GM12878 (cell line): ENCODE measurements at regions of chr12 and their contacts with region 1.

Region 1: DNA sequence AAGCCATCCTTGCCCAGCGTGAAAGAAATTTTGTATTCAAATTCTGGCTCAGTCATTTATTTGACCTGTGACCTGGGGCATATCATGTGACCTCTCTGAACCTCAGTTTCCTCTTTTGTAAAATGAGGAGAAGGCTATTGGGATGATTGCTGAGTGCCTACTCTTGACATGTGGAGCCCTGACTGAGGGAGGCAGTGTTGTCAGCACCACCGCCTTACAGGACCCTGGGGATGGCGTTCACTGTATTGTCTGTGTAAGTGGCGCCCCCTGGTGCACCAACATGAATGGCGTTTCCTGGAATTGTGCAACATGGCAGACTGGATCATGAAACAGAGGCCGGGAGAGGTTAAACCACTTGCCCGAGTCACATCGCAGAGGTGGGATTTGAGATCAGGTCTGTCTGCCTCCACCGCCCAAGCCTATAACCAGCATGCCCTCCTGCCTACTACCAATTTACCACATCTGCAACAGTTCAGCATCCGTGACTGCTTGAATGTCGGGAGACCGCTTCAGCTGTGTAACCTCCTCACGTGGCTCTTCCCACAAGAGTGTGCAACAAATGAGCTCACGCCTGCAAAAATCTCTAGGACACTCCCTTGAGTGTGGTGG is 20.1 kb upstream of the CCDC63 start:
- DNase-seq: peak; percentile 70
- ATAC-seq: peak; percentile 99
- H3K4me3 ChIP-seq: no peak overlapping the region
- H3K27ac ChIP-seq: no peak overlapping the region
- H3K4me1 ChIP-seq: peaks cover 10% of the 10 kb centered on the region; the same call in 1 of the 2 replicates
- H3K27me3 ChIP-seq: no peaks in the 10 kb centered on the region
- CTCF ChIP-seq: peak; percentile 89 to 99 (median 97)
- EP300 ChIP-seq: no peak
- POLR2A ChIP-seq: no peak
- RAD21 ChIP-seq: peak; percentile 98

Region 2: DNA sequence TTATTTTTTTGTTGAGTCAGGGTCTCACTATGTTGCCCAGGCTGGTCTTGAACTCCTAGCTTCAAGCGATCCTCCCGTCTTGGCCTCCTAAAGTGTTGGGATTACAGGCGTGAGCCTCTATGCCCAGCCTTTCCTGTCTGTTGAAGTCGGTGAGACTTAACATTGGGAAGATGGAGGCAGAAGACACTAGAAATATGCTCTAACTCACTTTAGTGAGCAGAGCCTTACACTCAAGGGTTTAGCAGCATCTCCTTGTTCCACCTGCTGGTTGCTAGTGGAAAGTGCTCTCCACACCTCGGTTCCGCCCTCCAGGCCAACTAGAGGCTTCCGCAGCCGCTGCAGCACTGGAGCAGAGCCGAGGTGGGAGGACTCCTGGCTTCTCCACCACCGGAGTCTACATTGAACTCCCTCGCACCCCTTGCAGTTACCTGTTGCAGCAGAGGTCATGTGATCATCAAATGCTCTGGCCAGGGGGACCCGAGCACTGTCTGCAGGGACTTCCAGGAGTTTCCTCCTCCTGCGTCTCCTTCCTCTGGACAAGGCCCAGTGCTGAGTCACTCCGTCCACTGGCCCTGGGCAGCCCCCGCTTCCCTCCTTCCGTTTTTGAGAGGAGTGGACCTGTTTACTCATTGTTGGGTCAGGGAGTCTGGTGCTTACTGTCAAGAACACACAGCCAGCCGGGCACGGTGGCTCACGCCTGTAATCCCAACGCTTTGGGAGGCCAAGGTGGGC is 128.4 kb before region 1 on chr12:
- CTCF ChIA-PET with region 1: interaction called, 10 read pairs
- POLR2A ChIA-PET with region 1: interaction called, 5 read pairs
- RAD21 ChIA-PET with region 1: interaction called, 3 read pairs
- SMC1A ChIA-PET with region 1: interaction called, 4 read pairs
- in situ Hi-C with region 1: loop called (anchors 5 kb)
- intact Hi-C with region 1: loop called (anchors 2 kb)
- DNase-seq: peak; percentile 90
- ATAC-seq: peak; percentile 99
- H3K4me3 ChIP-seq: no peak overlapping the region
- H3K27ac ChIP-seq: peak overlapping the region; percentile 64
- H3K4me1 ChIP-seq: peaks cover 29% of the 10 kb centered on the region
- H3K27me3 ChIP-seq: no peaks in the 10 kb centered on the region
- CTCF ChIP-seq: peak; percentile 88 to 90 (median 89)
- EP300 ChIP-seq: no peak
- POLR2A ChIP-seq: no peak
- RAD21 ChIP-seq: peak; percentile 92

Region 3: DNA sequence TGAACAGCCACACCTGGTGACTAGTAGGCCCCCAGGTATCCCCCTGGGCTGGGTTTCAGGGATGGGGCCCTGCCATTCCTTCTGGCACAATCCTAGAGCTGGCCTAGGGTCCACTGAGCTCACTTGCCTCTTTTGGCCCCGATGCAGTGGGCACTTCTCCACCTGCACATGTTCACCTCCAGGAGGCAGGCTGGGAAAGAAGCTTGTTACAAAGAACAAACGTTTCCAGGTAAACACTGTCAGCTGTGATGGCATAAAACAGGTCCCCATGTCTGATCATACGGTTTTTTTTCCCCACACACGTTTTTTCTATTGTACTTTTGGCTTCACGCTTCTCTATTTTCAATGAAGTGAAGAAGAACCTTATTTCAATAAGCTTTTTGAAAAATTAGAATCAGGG is 121.9 kb before region 1 on chr12:
- CTCF ChIA-PET with region 1: interaction called, 42 read pairs
- POLR2A ChIA-PET with region 1: interaction called, 5 read pairs
- RAD21 ChIA-PET with region 1: interaction called, 36 read pairs
- SMC1A ChIA-PET with region 1: interaction called, 24 read pairs
- in situ Hi-C with region 1: loop called (anchors 5 kb)
- intact Hi-C with region 1: loop called (anchors 1 kb)
- DNase-seq: no peak
- ATAC-seq: peak; percentile 72
- H3K4me3 ChIP-seq: no peak overlapping the region
- H3K27ac ChIP-seq: no peak overlapping the region
- H3K4me1 ChIP-seq: no peaks in the 10 kb centered on the region
- H3K27me3 ChIP-seq: no peaks in the 10 kb centered on the region
- CTCF ChIP-seq: peak; percentile 41 to 61 (median 60)
- EP300 ChIP-seq: no peak
- POLR2A ChIP-seq: no peak
- RAD21 ChIP-seq: peak; percentile 63

Region 4: GRCh38 chr12:110742718-110743570 is 83.8 kb before region 1 on chr12 and contains the start of gene PPP1CC:
- CTCF ChIA-PET with region 1: interaction called, 3 read pairs
- POLR2A ChIA-PET with region 1: interaction called, 3 read pairs
- RAD21 ChIA-PET with region 1: no interaction called
- SMC1A ChIA-PET with region 1: interaction called, 4 read pairs
- in situ Hi-C with region 1: no loop called
- intact Hi-C with region 1: loop called (anchors 2 kb)
- DNase-seq: peak; percentile 48
- ATAC-seq: peak; percentile 84
- H3K4me3 ChIP-seq: peak within 1 kb of the TSS; percentile 85
- H3K27ac ChIP-seq: peak within 1 kb of the TSS; percentile 63
- H3K4me1 ChIP-seq: peaks cover 6% of the 10 kb centered on the region; the same call in 1 of the 2 replicates
- H3K27me3 ChIP-seq: no peaks in the 10 kb centered on the region
- CTCF ChIP-seq: no peak
- EP300 ChIP-seq: no peak
- POLR2A ChIP-seq: peak; percentile 95
- RAD21 ChIP-seq: no peak
- polyA plus RNA-seq, gene PPP1CC: 64.4 to 111 TPM

Region 5: DNA sequence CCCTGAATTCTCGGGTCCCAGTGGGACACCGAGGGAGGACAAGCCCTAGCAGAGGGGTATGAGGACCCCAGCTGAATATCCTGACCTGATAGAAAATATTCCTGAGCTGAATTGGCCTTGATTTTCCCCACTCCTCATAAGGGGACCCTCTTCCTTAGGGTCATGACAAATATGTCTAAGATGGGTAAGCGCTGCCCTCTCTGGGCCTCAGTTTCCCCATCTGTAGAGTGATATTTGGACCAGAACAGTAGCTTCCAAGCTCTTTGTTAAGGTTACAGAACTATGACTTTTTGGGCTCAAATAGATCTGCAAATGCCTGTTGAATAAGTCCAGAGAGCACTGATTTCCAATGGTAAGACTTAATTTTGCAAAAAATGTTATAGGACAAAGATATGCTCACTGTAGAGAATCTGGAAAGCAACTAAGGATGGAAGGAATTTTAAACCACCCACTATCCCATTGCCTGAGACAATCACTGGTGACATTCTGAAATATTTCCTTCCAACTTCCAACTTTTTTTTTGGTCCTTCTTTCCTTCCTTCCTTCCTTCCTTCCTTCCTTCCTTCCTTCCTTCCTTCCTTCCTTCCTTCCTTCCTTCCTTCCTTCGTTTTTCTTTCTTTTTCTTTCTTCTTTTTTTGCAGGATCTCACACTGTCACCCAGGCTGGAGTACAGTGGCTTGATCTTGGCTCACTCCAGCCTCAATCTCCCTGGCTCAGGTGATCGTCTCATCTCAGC is 61.7 kb after region 1 on chr12:
- CTCF ChIA-PET with region 1: interaction called, 34 read pairs
- POLR2A ChIA-PET with region 1: no interaction called
- RAD21 ChIA-PET with region 1: interaction called, 7 read pairs
- SMC1A ChIA-PET with region 1: interaction called, 3 read pairs
- in situ Hi-C with region 1: no loop called
- intact Hi-C with region 1: loop called (anchors 2 kb)
- DNase-seq: no peak
- ATAC-seq: no peak
- H3K4me3 ChIP-seq: no peak overlapping the region
- H3K27ac ChIP-seq: no peak overlapping the region
- H3K4me1 ChIP-seq: no peaks in the 10 kb centered on the region
- H3K27me3 ChIP-seq: no peaks in the 10 kb centered on the region; a peak in 1 of 4 replicates
- CTCF ChIP-seq: no peak
- EP300 ChIP-seq: no peak
- POLR2A ChIP-seq: no peak
- RAD21 ChIP-seq: no peak

Region 6: GRCh38 chr12:111102062-111102739 is 275.5 kb after region 1 on chr12:
- CTCF ChIA-PET with region 1: no interaction called
- POLR2A ChIA-PET with region 1: no interaction called
- RAD21 ChIA-PET with region 1: no interaction called
- SMC1A ChIA-PET with region 1: no interaction called
- in situ Hi-C with region 1: no loop called
- intact Hi-C with region 1: no loop called
- DNase-seq: no peak
- ATAC-seq: no peak
- H3K4me3 ChIP-seq: no peak overlapping the region
- H3K27ac ChIP-seq: no peak overlapping the region
- H3K4me1 ChIP-seq: peaks cover 13% of the 10 kb centered on the region
- H3K27me3 ChIP-seq: no peaks in the 10 kb centered on the region; a peak in 3 of 4 replicates
- CTCF ChIP-seq: no peak
- EP300 ChIP-seq: no peak
- POLR2A ChIP-seq: no peak
- RAD21 ChIP-seq: no peak